GM10248 (cell line): ENCODE measurements at regions of chr13 and their contacts with region 1.

Region 1: GRCh38 chr13:78121459-78122348 is 203.1 kb upstream of the EDNRB start:
- DNase-seq: peak; percentile 36
- CTCF ChIP-seq: peak; percentile 87

Region 2: GRCh38 chr13:77774181-77774580 is 347.5 kb before region 1 on chr13:
- CTCF ChIA-PET with region 1: interaction called, 29 read pairs
- POLR2A ChIA-PET with region 1: no interaction called
- DNase-seq: no peak
- CTCF ChIP-seq: no peak

Region 3: GRCh38 chr13:77779552-77780272 is 342.0 kb before region 1 on chr13:
- CTCF ChIA-PET with region 1: interaction called, 29 read pairs
- POLR2A ChIA-PET with region 1: no interaction called
- DNase-seq: peak; percentile 38
- CTCF ChIP-seq: peak; percentile 41

Region 4: DNA sequence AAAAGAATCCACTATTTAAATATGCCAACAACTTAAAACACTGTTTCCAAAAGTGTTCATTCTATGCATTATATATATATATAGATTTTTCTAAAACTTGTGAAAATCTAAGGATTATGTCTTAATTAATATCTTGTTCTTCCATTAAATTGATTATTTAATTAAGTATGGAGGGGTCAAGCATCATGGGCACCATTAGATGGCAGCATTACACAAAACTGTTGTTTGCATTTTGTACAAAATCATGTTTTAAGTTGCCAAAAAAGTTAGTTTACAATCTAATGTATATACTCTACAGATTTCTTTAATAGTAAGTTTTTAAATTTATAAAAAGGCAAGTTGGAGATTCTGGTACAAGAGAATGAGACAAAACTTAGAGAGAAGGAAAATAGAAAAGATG is 10.1 kb after region 1 on chr13:
- CTCF ChIA-PET with region 1: interaction called, 22 read pairs
- POLR2A ChIA-PET with region 1: no interaction called
- DNase-seq: no peak
- CTCF ChIP-seq: peak; percentile 35

Region 5: DNA sequence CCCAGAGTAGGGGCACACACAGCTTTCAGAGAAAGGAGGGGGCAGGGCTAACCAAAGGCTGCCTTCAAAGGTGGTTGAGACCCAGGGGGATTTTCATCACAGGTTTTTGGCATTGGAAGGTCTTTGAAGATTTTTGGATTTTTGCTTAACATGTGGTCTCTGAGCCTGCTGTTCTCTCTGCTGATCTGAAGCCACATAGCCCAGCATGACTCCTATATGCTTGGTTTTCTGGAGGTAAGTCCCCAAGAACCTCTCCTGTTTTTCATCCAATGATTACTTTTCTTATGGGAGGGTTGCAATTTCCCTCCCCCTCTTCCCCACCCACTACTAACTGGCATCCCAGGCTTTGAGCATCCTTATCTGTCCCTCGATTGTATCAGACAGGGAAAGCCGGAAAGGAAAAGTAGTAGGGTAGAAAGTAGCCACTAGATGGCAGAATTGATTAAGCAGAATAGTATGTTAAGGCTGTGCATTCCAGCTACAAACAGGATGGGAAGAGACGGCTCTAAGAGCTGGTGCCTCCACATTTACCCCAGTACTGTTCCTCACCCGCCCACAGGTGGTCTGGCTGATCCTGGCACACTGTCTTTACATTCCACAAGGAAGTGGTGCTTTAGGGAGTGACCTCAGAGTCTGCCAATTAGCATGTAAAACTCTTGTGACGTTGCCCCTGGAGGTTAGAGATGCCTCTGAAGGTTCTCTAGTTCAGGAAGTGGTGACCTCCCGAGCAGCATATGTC is 15.9 kb after region 1 on chr13:
- CTCF ChIA-PET with region 1: interaction called, 18 read pairs
- POLR2A ChIA-PET with region 1: no interaction called
- DNase-seq: peak; percentile 37
- CTCF ChIP-seq: peak; percentile 72

Region 6: GRCh38 chr13:78161266-78161665 is 39.6 kb after region 1 on chr13:
- CTCF ChIA-PET with region 1: no interaction called
- POLR2A ChIA-PET with region 1: no interaction called
- DNase-seq: no peak
- CTCF ChIP-seq: no peak